Sigmoid colon (tissue), 7 donors: ENCODE measurements at regions of chr3 and their contacts with region 1.

Region 1: DNA sequence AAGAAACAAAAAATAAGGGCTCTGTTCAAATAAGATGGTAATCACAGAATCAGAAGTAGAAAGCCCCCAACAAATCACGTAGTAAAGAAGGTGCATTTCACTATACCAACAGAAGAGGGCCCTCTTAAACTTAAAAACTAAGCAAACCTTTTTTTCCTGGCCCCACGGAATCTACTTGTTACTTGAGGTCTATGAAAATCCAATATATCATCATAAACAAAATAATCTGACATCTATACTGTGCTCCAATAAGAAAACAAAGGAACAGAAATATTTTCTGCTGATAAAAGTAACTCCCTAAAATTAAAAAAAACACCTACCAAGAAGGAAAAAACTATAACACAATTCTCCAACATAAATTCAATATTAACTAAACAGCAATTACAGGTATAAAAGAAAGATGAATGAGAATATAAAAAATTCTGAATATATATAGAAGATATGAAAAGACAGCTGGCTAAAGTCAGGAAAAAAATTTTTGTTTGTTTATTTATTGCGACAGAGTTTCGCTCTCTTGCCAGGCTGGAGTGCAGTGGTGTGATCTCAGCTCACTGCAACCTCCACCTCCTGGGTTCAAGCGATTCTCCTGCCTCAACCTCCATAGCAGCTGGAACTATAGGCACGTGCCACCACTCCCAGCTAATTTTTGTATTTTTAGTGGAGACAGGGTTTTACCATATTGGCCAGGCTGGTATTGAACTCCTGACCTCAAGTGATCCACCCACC is 81.8 kb downstream of the CLASP2 start:
- DNase-seq: no peak
- H3K4me3 ChIP-seq: no peak overlapping the region
- H3K27ac ChIP-seq: peak overlapping the region in 1 of 4 donors; percentile 24
- H3K4me1 ChIP-seq: peaks cover 0 to 8% (median 3%) of the 10 kb centered on the region in 4 donors
- H3K27me3 ChIP-seq: no peaks in the 10 kb centered on the region
- CTCF ChIP-seq: peak; percentile 61 to 76 (median 66)
- EP300 ChIP-seq: no peak
- POLR2A ChIP-seq: no peak

Region 2: GRCh38 chr3:33717866-33718594 is 81.7 kb after region 1 on chr3 and contains the start of gene CLASP2:
- intact Hi-C with region 1: loop called (anchors 2 kb)
- DNase-seq: peak; percentile 94
- H3K4me3 ChIP-seq: peak within 1 kb of the TSS; percentile 69 to 94 (median 83)
- H3K27ac ChIP-seq: peak within 1 kb of the TSS; percentile 96 to 99 (median 96)
- H3K4me1 ChIP-seq: peaks cover 0 to 16% (median 12%) of the 10 kb centered on the region in 4 donors
- H3K27me3 ChIP-seq: no peaks in the 10 kb centered on the region
- CTCF ChIP-seq: no peak
- EP300 ChIP-seq: no peak
- POLR2A ChIP-seq: peak; percentile 31
- total RNA-seq, gene CLASP2: 77.7 to 122 (median 94.5) TPM

Region 3: DNA sequence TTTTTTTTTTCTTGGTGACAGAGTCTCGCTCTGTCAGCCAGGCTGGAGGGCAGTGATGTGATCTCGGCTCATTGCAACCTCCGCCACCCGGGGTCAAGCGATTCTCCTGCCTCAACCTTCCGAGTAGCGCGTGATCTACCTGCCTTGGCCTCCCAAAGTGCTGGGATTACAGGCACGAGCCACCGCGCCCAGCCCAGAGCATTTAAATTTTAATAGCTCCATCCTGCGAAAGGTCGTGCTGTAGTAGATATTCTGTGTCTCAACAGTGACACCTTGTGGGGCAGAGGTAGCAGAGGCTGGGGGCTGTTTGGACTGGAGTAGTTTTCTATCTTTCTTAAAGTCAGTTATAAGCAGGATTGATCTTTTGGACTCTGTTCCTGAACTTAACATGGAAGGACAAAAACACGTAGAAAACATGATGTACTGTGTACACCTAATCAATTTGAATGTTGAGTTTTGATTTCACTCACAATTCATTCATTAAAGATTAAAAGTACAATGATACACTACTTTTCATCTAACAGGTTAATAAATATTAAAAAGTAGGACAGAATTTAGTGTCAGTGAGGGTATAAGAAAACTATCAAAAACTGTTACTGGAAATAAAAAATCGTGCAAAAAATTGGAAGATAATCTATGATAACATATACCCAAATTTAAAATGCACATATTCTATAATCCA is 151.2 kb after region 1 on chr3:
- intact Hi-C with region 1: loop called (anchors 1 kb)
- DNase-seq: peak; percentile 73
- H3K4me3 ChIP-seq: peak overlapping the region in 3 of 4 donors; percentile 11 to 29 (median 21)
- H3K27ac ChIP-seq: no peak overlapping the region
- H3K4me1 ChIP-seq: peaks cover 0 to 4% (median 2%) of the 10 kb centered on the region in 4 donors
- H3K27me3 ChIP-seq: no peaks in the 10 kb centered on the region
- CTCF ChIP-seq: peak; percentile 31 to 71 (median 60)
- EP300 ChIP-seq: no peak
- POLR2A ChIP-seq: no peak